Thyroid gland (tissue), 4 donors: ENCODE measurements at regions of chr7 and their contacts with region 1.

Region 1: DNA sequence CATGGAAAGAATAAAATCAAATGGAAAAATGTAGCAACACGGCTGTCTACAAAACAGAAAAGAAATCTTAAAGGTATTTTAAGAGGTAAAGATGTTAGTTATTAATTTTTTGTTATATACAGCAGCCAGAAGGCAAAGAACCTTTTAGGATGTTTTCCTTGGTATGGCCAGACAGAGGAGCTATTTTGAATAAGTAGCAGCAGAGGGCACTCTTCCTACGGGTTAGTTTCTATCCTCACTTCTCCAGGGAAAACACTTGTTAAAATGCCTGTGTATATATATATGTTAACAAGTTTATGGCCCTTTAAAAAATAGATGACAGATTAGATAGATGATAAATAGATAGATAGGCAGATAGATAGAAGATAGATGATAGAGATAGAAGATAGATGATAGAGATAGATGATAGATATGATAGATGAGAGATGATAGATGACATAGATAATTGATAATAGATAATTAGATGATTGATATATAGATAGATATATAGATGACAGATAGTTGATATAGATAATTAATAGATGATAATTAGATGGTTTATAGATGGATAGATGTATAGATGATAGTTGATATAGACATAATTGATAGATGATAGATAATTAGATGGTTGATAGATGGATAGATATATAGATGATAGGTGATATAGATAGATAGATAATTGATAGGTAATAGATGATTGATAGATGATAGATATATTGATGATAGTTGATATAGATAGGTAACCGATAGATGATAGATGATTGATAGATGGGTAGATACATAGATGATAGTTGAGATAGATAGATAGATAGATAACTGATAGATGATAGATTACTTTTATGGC is 57.8 kb upstream of the WIPF3 start:
- DNase-seq: no peak
- H3K4me3 ChIP-seq: no peak overlapping the region
- H3K27ac ChIP-seq: no peak overlapping the region
- H3K4me1 ChIP-seq: no peaks in the 10 kb centered on the region
- H3K27me3 ChIP-seq: no peaks in the 10 kb centered on the region
- CTCF ChIP-seq: peak in 5 of 6 experiments; percentile 14 to 61 (median 50)
- POLR2A ChIP-seq: no peak

Region 2: GRCh38 chr7:28847681-28848080 is 900.8 kb before region 1 on chr7:
- intact Hi-C with region 1: no loop called
- DNase-seq: no peak
- H3K4me3 ChIP-seq: no peak overlapping the region
- H3K27ac ChIP-seq: no peak overlapping the region
- H3K4me1 ChIP-seq: no peaks in the 10 kb centered on the region
- H3K27me3 ChIP-seq: no peaks in the 10 kb centered on the region
- CTCF ChIP-seq: no peak
- POLR2A ChIP-seq: no peak

Region 3: DNA sequence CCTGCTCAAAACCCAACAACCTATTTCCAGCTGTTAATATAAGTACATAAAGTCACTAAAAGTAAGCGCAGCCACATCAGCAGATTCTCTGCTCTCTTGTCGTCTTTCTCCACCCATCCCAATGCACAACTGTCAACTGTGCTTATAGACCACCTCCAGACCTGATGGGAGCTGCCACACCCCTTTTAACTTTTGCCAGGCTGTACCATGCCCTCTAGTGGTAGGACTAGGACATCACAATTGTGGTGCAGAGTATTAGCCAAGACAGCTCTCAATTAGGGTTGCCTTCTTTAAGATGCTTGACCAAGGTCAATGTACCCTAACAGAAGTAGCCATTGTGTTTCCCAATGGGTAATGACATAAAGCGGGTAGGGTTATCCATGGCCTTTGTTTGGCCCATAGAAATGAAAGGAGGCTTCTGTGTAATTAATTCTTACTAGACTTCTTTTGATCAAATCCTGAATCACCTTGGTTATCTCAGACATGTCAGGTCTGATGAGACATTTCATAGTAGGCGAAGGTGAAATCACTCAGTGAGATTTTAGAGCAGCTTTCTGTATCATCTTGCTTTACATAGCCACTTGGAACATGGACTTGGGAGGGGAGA is 173.0 kb after region 1 on chr7:
- intact Hi-C with region 1: loop called (anchors 10 kb)
- DNase-seq: peak; percentile 28
- H3K4me3 ChIP-seq: no peak overlapping the region
- H3K27ac ChIP-seq: no peak overlapping the region
- H3K4me1 ChIP-seq: peaks cover 3 to 12% of the 10 kb centered on the region in 2 donors
- H3K27me3 ChIP-seq: no peaks in the 10 kb centered on the region
- CTCF ChIP-seq: peak; percentile 68 to 90 (median 76)
- POLR2A ChIP-seq: no peak

Region 4: GRCh38 chr7:29968683-29969395 is 220.3 kb after region 1 on chr7:
- intact Hi-C with region 1: no loop called
- DNase-seq: no peak
- H3K4me3 ChIP-seq: no peak overlapping the region
- H3K27ac ChIP-seq: no peak overlapping the region
- H3K4me1 ChIP-seq: no peaks in the 10 kb centered on the region
- H3K27me3 ChIP-seq: no peaks in the 10 kb centered on the region
- CTCF ChIP-seq: no peak
- POLR2A ChIP-seq: no peak